Activated B cell treated with CpG ODN at 0.5 μM for 24 hours (primary cell): ENCODE measurements at regions of chr2 and their contacts with region 1.

Region 1: GRCh38 chr2:113756355-113757137 is at the start of gene SLC35F5:
- DNase-seq: peak; percentile 100
- ATAC-seq: peak; percentile 83
- H3K4me3 Mint-ChIP-seq: peak within 1 kb of the TSS; percentile 88
- H3K27ac Mint-ChIP-seq: peak within 1 kb of the TSS; percentile 96
- H3K4me1 Mint-ChIP-seq: peaks cover 38% of the 10 kb centered on the region
- H3K27me3 Mint-ChIP-seq: no peaks in the 10 kb centered on the region
- CTCF ChIP-seq: no peak
- total RNA-seq, gene SLC35F5: 34.3 and 48.3 TPM in 2 replicates

Region 2: DNA sequence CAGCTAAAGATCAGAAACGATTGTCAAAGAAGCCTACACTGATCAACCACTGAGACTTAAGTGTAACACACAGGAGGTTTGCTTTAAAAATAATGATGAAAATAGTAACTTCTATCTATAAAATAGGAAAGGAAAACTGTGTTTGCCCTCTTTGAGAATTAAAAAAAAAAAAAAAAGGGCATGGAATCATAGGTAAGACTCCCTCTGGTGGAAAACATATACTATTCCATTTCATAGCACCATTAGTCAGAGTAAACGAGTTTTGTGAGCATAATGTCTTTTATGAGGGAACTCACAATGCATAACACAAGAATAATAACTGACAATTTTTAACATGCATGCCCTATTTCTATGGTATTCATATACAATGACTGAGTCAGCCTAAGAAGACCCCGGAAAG is 36.4 kb before region 1 on chr2:
- CTCF ChIA-PET with region 1: no interaction called
- POLR2A ChIA-PET with region 1: interaction called, 13 read pairs
- intact Hi-C with region 1: no loop called
- DNase-seq: no peak
- ATAC-seq: no peak
- H3K4me3 Mint-ChIP-seq: no peak overlapping the region
- H3K27ac Mint-ChIP-seq: no peak overlapping the region
- H3K4me1 Mint-ChIP-seq: no peaks in the 10 kb centered on the region
- H3K27me3 Mint-ChIP-seq: no peaks in the 10 kb centered on the region
- CTCF ChIP-seq: no peak

Region 3: DNA sequence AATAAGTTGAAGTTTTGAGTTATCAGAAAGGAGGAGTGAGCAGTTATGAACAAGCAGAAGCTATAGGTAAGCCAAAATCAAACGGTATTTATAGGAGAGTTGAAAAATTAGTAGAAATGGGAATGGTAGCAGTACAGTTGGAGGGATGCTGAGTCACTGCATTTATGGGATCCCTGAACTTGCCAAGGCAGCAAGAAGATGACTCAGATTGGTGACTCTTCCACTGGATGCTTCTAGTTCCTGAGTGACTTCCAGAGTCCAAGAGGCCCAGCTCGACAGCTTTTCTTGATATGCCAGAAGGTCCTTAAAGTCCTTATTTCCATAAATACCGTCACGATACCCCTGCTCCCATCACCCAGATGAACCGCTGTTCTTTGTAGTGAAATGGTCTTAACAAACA is 102.2 kb after region 1 on chr2:
- CTCF ChIA-PET with region 1: no interaction called
- POLR2A ChIA-PET with region 1: interaction called, 28 read pairs
- intact Hi-C with region 1: loop called (anchors 1 kb)
- DNase-seq: no peak
- ATAC-seq: no peak
- H3K4me3 Mint-ChIP-seq: peak overlapping the region; percentile 76
- H3K27ac Mint-ChIP-seq: peak overlapping the region; percentile 93
- H3K4me1 Mint-ChIP-seq: peaks cover 93% of the 10 kb centered on the region
- H3K27me3 Mint-ChIP-seq: no peaks in the 10 kb centered on the region
- CTCF ChIP-seq: no peak

Region 4: GRCh38 chr2:113896791-113897190 is 140.2 kb after region 1 on chr2:
- CTCF ChIA-PET with region 1: no interaction called
- POLR2A ChIA-PET with region 1: interaction called, 191 read pairs
- intact Hi-C with region 1: no loop called
- DNase-seq: no peak
- ATAC-seq: no peak
- H3K4me3 Mint-ChIP-seq: peak overlapping the region; percentile 66
- H3K27ac Mint-ChIP-seq: peak overlapping the region; percentile 37
- H3K4me1 Mint-ChIP-seq: peaks cover 100% of the 10 kb centered on the region
- H3K27me3 Mint-ChIP-seq: no peaks in the 10 kb centered on the region
- CTCF ChIP-seq: no peak

Region 5: GRCh38 chr2:113910110-113910717 is 153.7 kb after region 1 on chr2:
- CTCF ChIA-PET with region 1: no interaction called
- POLR2A ChIA-PET with region 1: interaction called, 13 read pairs
- intact Hi-C with region 1: no loop called
- DNase-seq: no peak
- ATAC-seq: peak; percentile 66
- H3K4me3 Mint-ChIP-seq: peak overlapping the region; percentile 29
- H3K27ac Mint-ChIP-seq: peak overlapping the region; percentile 75
- H3K4me1 Mint-ChIP-seq: peaks cover 79% of the 10 kb centered on the region
- H3K27me3 Mint-ChIP-seq: no peaks in the 10 kb centered on the region
- CTCF ChIP-seq: no peak

Region 6: GRCh38 chr2:113940891-113941290 is 184.3 kb after region 1 on chr2:
- CTCF ChIA-PET with region 1: no interaction called
- POLR2A ChIA-PET with region 1: no interaction called
- intact Hi-C with region 1: loop called (anchors 5 kb)
- DNase-seq: no peak
- ATAC-seq: no peak
- H3K4me3 Mint-ChIP-seq: no peak overlapping the region
- H3K27ac Mint-ChIP-seq: no peak overlapping the region
- H3K4me1 Mint-ChIP-seq: peaks cover 3% of the 10 kb centered on the region
- H3K27me3 Mint-ChIP-seq: no peaks in the 10 kb centered on the region
- CTCF ChIP-seq: no peak